Mucosa of descending colon (tissue), 3 donors: ENCODE measurements at regions of chr1 and their contacts with region 1.

Region 1: DNA sequence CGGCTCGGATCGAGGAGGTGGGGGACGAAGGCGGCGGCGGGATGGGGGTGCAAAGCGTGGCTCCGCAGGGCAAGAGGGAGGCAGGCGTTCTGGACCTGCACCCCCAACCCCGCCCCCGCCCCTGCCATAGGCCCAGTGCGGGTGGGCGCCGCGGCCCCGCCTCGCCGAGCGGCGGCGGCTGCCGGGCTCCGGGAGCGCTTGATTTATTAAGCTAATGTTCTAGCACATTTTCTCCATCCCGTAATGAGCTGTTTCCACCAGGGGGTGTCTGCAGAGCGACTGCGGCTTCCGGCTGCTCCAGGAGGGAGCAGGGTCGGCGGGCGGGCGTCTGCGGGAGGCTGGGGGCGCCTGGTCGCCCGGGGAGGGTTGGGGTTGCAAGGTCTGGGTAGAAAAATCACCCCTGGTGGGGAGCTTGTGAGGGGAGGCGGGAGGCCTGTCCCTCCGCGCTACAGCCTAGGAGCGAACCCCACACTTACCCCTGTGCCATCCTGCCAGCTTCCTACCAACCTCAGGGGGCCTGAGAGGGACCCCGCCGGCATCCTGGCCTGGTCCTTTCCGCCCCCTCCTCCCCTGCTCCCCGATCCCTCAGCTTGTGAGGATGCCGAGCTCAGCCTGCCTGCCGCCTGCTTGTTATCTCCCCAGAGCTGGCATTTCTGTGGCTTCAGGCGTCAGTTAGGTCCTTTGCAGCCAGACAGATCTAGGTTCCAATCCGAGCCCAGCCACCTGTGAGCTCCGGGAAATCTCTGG is 48.5 kb upstream of the ACOT11 start:
- DNase-seq: peak in 2 of 3 donors; percentile 57 to 65
- ATAC-seq: peak; percentile 81
- H3K4me3 ChIP-seq: no peak overlapping the region
- H3K4me1 ChIP-seq: peaks cover 14% of the 10 kb centered on the region
- CTCF ChIP-seq: no peak

Region 2: GRCh38 chr1:54273092-54273794 is 226.3 kb before region 1 on chr1:
- intact Hi-C with region 1: loop called in 1 of 2 experiments (anchors 10 kb)
- DNase-seq: peak in 2 of 3 donors; percentile 59 to 68
- ATAC-seq: peak; percentile 23
- H3K4me3 ChIP-seq: no peak overlapping the region
- H3K4me1 ChIP-seq: peaks cover 36% of the 10 kb centered on the region
- CTCF ChIP-seq: no peak

Region 3: DNA sequence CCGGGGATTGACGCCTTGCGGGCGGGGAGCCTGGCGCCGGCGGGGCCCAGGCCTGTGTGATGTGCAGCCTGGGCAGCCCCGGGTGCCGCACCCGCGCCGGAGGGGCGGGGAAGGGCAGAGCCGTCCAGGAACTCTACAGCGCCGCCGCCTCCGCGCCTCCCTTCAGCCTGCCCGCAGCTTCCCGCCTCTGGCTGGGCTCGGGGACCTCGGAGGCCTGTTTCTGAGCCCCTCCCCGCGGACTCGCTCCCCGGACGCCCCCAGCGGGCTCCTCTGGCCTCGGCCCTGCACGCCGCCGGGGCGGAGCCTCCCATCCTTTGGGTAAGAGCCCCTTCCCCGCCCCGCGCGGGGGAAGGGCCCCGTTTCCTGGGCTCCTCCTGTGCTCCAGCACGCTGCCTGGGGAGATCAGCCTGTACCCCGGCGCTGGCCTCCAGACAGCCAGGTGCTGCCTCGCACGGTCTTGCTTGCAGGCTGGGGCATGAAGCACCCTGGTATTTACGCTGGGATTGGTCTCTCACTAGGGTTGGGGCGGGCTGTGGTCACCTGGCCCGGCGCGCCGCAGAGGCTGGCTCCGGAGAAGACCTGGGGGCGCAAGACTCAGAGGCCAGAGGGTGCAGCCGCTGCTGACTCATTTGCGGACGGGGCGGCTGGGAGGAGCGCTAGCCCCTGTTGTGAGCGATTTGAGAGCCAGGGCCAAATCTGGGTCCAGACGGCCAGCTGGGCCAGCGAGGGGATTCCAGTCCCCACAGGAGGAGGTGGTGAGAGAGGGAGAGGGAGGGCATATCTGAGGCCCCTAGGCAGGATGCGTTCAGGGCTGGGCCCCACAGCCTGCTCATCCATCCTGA is 42.8 kb after region 1 on chr1:
- intact Hi-C with region 1: no loop called
- DNase-seq: peak; percentile 87 to 92 (median 87)
- ATAC-seq: peak; percentile 95
- H3K4me3 ChIP-seq: peak overlapping the region; percentile 25
- H3K4me1 ChIP-seq: peaks cover 14% of the 10 kb centered on the region
- CTCF ChIP-seq: no peak

Region 4: DNA sequence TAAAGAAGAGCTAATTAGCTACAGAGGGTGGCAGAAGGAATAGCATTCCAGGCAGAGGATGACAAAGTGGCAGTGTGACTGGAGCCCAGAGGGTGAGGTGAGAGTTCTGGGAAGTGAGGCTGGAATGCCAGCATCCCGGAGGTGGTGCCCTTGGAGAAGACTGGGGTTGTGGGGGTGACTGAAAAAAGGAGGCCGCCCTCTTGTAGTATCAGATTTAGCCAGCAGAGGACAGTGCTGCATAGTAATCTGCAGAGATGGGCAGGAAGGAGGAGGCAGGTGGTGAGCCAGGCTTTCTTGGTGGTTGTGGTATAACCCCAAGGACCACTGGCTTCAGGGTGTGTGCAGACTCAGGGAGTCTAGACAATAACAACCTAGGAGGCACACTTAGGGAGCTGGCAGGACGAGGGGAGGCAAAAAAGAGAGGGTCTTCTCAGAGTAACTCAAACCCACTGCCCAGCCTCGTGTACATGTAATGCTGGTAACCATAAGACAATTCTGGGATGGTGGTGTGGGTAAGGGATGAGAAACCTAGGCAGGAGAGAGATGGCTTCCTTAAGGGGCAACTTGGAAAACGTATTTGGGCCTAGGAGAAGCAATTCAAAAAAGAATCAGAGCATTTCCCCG is 172.6 kb after region 1 on chr1:
- intact Hi-C with region 1: no loop called
- DNase-seq: peak in 2 of 3 donors; percentile 65 to 81
- ATAC-seq: peak; percentile 93
- H3K4me3 ChIP-seq: no peak overlapping the region
- H3K4me1 ChIP-seq: no peaks in the 10 kb centered on the region
- CTCF ChIP-seq: peak; percentile 77

Region 5: GRCh38 chr1:54800899-54801759 is 301.6 kb after region 1 on chr1 and contains the start of gene TTC22:
- intact Hi-C with region 1: loop called in 1 of 2 experiments (anchors 10 kb)
- DNase-seq: peak; percentile 87 to 91 (median 89)
- ATAC-seq: peak; percentile 77
- H3K4me3 ChIP-seq: peak within 1 kb of the TSS; percentile 39
- H3K4me1 ChIP-seq: peaks cover 57% of the 10 kb centered on the region
- CTCF ChIP-seq: peak; percentile 73
- total RNA-seq, gene TTC22: 51.6 to 122 (median 70.8) TPM

Region 6: GRCh38 chr1:54835970-54836369 is 336.4 kb after region 1 on chr1:
- intact Hi-C with region 1: no loop called
- DNase-seq: no peak
- ATAC-seq: no peak
- H3K4me3 ChIP-seq: no peak overlapping the region
- H3K4me1 ChIP-seq: no peaks in the 10 kb centered on the region
- CTCF ChIP-seq: no peak